Ovary (tissue), 10 donors: ENCODE measurements at regions of chr17 and their contacts with region 1.

Region 1: DNA sequence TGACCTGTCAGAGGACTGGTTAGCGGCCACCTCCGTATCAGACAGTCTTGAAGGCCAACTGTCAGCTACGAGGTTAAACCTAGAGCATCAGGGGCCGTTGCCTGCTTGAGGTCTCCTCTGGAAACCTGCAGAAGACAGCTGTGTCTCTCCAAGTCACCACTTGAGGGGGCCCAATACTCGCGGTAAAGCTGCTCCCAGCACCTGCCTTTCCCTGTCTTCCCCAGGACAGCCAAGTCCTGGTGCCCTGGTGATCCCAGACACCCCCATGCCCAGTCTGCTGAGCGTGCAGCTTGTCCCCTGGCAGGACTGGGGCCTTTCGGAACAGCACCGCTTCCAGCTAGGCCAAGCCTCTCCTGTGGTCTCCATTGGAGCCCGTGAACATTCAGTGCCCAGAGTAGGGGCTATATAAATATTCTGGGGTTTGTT is 80.1 kb downstream of the DNAH17 start:
- DNase-seq: peak; percentile 42 to 71 (median 54)
- H3K4me3 ChIP-seq: no peak overlapping the region
- H3K27ac ChIP-seq: no peak overlapping the region
- H3K4me1 ChIP-seq: no peaks in the 10 kb centered on the region
- H3K27me3 ChIP-seq: no peaks in the 10 kb centered on the region
- CTCF ChIP-seq: peak in 2 of 3 donors; percentile 42 to 52
- EP300 ChIP-seq: no peak
- POLR2A ChIP-seq: no peak

Region 2: DNA sequence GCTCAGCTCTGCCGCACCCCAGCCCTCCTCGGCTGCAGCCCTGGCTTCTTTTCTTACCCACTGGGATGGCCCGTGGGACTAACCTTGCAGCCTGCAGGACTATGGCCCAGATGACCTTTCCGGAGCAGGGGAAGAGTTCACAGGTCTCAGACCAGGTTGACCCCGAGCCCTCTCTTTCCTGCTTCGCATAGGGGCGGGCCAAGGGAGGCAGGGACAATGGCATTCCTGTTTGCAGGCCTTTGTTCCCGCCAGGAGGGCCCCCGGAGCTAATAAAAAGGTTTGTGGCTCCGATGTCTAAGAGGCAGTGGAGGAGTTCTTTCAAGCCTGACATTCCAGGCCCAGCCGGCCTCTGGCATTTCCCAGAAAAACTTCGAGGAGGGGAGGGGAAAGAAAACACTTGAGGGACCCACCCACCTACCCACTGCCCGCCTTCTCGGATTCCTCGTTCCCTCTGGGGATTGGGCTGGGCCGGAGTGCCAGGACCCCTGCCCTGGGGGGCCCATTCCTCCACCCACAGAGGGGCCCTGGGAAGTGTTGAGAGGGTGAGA is 131.5 kb before region 1 on chr17:
- intact Hi-C with region 1: no loop called
- DNase-seq: peak in 3 of 5 donors; percentile 41 to 58 (median 52)
- H3K4me3 ChIP-seq: no peak overlapping the region
- H3K27ac ChIP-seq: peak overlapping the region in 1 of 2 donors; percentile 87
- H3K4me1 ChIP-seq: peaks cover 16% of the 10 kb centered on the region
- H3K27me3 ChIP-seq: no peaks in the 10 kb centered on the region
- CTCF ChIP-seq: no peak
- EP300 ChIP-seq: no peak
- POLR2A ChIP-seq: no peak

Region 3: DNA sequence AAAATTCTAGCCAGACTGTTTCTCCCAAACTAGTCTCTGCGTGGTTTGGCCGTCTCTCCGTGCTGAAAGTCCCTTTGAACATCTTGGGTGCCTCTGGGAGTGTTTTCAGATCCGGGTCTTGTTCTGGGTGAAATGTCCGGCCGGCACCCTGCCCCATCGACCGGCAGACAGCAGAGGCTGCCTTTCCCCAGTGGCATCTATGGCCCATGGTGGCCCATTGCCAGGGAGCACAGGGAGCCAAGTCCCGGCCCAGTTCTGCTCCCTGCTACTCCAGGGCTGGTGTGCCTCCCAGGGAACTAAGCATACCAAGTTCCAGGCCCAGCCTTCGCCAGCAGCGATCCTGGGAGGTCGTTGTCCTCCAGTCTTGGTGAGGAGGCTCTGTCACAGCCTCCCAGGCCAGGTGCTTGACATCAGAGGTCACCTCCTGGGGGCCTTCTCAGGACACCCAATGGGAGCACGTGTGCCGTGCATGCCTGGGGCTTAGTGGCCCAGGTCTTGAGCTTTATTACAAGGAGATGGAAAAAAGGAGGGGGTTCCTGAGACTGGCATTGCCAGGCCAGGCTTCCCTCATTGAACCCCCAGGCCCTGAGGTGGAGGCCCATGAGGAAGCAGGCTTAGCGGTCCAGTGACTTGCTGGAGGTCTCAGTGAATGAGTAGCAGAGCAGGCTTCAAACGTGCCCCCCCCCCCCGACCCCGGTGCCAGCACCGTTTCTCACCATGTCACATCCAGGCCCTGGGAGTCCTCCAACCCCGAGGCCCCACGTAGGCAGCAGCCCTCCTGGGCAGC is 64.7 kb before region 1 on chr17:
- intact Hi-C with region 1: no loop called
- DNase-seq: no peak
- H3K4me3 ChIP-seq: no peak overlapping the region
- H3K27ac ChIP-seq: no peak overlapping the region
- H3K4me1 ChIP-seq: peaks cover 2% of the 10 kb centered on the region
- H3K27me3 ChIP-seq: no peaks in the 10 kb centered on the region
- CTCF ChIP-seq: no peak
- EP300 ChIP-seq: no peak
- POLR2A ChIP-seq: no peak

Region 4: GRCh38 chr17:78557598-78558039 is 60.5 kb after region 1 on chr17:
- intact Hi-C with region 1: loop called in 1 of 4 experiments (anchors 2 kb)
- DNase-seq: no peak
- H3K4me3 ChIP-seq: no peak overlapping the region
- H3K27ac ChIP-seq: no peak overlapping the region
- H3K4me1 ChIP-seq: no peaks in the 10 kb centered on the region
- H3K27me3 ChIP-seq: no peaks in the 10 kb centered on the region
- CTCF ChIP-seq: no peak
- EP300 ChIP-seq: no peak
- POLR2A ChIP-seq: no peak

Region 5: GRCh38 chr17:78588258-78589030 is 91.3 kb after region 1 on chr17:
- intact Hi-C with region 1: no loop called
- DNase-seq: no peak
- H3K4me3 ChIP-seq: no peak overlapping the region
- H3K27ac ChIP-seq: no peak overlapping the region
- H3K4me1 ChIP-seq: no peaks in the 10 kb centered on the region
- H3K27me3 ChIP-seq: no peaks in the 10 kb centered on the region
- CTCF ChIP-seq: no peak
- EP300 ChIP-seq: no peak
- POLR2A ChIP-seq: no peak

Region 6: GRCh38 chr17:78708510-78708973 is 211.4 kb after region 1 on chr17:
- intact Hi-C with region 1: loop called in 2 of 4 experiments (anchors 10 kb)
- DNase-seq: peak; percentile 36 to 73 (median 58)
- H3K4me3 ChIP-seq: no peak overlapping the region
- H3K27ac ChIP-seq: no peak overlapping the region
- H3K4me1 ChIP-seq: no peaks in the 10 kb centered on the region
- H3K27me3 ChIP-seq: no peaks in the 10 kb centered on the region
- CTCF ChIP-seq: peak; percentile 41 to 49 (median 46)
- EP300 ChIP-seq: no peak
- POLR2A ChIP-seq: no peak